Activated T-helper 1 cell treated with anti-CD3 and anti-CD28 coated beads, Interleukin-12 subunit alpha, Interleukin-12 subunit beta, Interleukin-2, Interleukin-4 antibody, amounts not matched to agents 30 ng/mL and 10 ng/mL and 1 ng/mL, durations not matched to agents 14 hours and 24 hours and 36 hours (primary cell): ENCODE measurements at regions of chr1 and their contacts with region 1.

Region 1: DNA sequence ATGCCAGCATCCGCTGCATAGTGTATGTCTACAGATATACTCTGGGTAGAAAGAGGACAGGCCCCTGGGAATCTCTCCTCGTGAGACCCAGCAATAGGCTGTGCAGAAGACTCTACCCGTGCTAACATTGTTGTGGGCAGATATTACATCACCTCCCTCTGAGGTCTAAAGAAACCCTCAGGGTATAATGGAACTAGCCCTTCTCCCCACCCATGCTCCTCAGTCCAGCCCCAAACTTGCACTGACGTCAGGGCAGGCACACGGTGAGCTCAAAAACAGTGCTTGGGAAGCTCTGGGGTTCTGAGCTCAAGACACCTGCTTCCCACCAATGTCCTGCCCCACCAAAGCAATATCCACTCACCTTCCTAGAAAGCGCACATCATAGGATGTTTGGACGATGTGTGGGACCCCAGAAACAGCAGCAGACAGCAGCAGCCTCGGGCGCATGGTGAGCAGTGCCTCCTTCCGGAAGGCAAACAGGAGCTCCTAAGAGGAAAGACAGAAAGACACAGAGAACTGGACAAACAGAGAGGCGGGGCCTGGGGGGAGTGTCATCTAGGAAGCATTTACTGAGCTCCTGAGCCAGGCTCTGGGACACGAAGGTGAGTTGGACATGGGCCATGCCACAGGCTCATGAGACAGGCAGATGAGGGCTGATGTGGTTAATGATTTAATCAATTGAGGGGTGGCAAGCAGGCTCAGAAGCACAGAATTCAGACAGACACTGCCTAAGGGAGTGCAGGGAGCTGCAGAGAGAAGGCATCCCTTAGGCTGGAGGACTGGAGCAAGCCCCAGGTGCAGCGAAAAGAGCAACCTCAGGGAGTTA is 4.8 kb downstream of the OVGP1 start:
- DNase-seq: no peak
- H3K4me3 Mint-ChIP-seq: no peak overlapping the region
- H3K27ac Mint-ChIP-seq: no peak overlapping the region
- H3K4me1 Mint-ChIP-seq: no peaks in the 10 kb centered on the region
- H3K27me3 Mint-ChIP-seq: peaks cover 15% of the 10 kb centered on the region

Region 2: GRCh38 chr1:111110197-111110899 is 312.4 kb before region 1 on chr1:
- intact Hi-C with region 1: no loop called
- DNase-seq: no peak
- H3K4me3 Mint-ChIP-seq: no peak overlapping the region
- H3K27ac Mint-ChIP-seq: no peak overlapping the region
- H3K4me1 Mint-ChIP-seq: peaks cover 3% of the 10 kb centered on the region
- H3K27me3 Mint-ChIP-seq: no peaks in the 10 kb centered on the region

Region 3: DNA sequence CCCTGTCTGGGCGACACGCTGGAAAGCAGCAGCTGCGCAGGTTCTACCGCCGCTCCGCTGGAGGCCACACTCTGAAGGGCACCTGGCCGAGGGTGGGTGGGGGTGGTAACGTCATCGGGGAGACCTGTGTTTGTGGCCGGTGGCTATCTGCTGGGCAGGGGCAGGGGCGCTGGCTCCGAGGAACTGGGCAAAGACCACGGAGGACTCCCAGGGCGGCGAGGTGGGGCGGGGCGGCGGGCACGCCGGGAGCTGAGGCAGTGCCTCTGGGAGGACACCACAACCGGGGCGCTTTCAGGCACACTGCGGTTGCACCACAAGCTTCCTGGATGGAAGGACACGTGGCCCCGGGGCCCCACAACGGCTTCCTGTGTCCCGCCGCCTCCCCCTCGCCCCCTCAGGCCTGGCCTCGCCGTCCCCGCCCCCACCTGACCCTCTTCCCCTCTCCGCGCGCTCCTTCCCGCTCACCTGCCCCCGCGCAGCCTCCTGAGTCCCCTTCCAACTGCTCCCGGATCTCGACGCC is 219.0 kb before region 1 on chr1:
- intact Hi-C with region 1: no loop called
- DNase-seq: peak; percentile 80
- H3K4me3 Mint-ChIP-seq: peak overlapping the region; percentile 100
- H3K27ac Mint-ChIP-seq: peak overlapping the region; percentile 92
- H3K4me1 Mint-ChIP-seq: peaks cover 59% of the 10 kb centered on the region
- H3K27me3 Mint-ChIP-seq: no peaks in the 10 kb centered on the region

Region 4: DNA sequence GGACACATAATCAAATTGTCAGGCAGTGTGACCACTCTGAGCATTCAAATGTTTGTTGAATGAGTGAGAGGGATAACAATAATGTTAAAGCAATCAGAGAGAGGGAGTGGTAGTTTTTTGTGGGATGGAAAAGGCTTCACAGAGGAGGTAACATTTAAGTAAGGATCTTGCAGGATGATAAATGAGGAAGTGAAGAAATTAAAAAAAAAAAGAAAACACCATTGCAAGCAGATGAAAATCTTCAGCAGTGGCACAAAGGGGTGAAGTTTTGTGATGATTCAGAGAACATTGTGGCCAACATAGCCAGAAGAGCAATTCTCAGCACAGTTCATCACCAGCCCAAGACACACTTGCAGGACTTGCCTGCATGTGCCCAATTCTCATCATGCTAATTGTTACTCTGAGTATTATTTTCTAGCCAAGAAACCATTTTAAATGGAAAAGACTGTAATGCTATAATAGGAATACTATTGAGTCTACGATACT is 30.3 kb before region 1 on chr1:
- intact Hi-C with region 1: no loop called
- DNase-seq: no peak
- H3K4me3 Mint-ChIP-seq: no peak overlapping the region
- H3K27ac Mint-ChIP-seq: no peak overlapping the region
- H3K4me1 Mint-ChIP-seq: no peaks in the 10 kb centered on the region
- H3K27me3 Mint-ChIP-seq: peaks cover 31% of the 10 kb centered on the region

Region 5: DNA sequence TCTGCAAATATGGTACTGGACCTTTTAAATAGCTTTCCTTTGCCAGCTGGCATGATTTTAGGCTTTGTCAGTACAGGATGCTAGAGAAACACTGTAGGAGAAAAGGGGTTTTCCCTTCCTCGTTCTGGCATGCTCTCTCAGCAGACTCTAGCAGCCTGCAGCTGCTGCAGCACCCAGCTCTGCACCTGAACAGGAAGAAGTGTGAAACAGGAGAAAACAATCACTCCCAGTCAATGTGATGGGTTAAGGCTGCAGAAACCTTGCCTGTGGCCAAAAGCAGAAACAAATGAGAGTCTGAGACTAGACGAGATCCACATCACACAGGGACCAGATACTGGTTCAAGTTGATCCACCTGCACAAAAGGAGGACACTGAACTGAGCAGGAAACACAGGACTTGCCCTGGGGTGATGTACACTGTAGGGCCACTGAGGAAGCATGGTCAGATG is 16.4 kb before region 1 on chr1:
- intact Hi-C with region 1: loop called (anchors 2 kb)
- DNase-seq: peak; percentile 46
- H3K4me3 Mint-ChIP-seq: no peak overlapping the region
- H3K27ac Mint-ChIP-seq: no peak overlapping the region
- H3K4me1 Mint-ChIP-seq: peaks cover 20% of the 10 kb centered on the region
- H3K27me3 Mint-ChIP-seq: peaks cover 13% of the 10 kb centered on the region